ENCODE measurements at regions of chr4 and their contacts with region 1.

Region 1: GRCh38 chr4:91113130-91113706 is 986.0 kb downstream of the CCSER1 start:
- DNase-seq: peak; percentile 39
- H3K4me3 Mint-ChIP-seq: no peak overlapping the region
- H3K27ac Mint-ChIP-seq: no peak overlapping the region
- H3K4me1 Mint-ChIP-seq: no peaks in the 10 kb centered on the region
- H3K27me3 Mint-ChIP-seq: no peaks in the 10 kb centered on the region
- CTCF ChIP-seq: peak; percentile 71

Region 2: GRCh38 chr4:90317785-90318184 is 795.4 kb before region 1 on chr4:
- CTCF ChIA-PET with region 1: no interaction called
- POLR2A ChIA-PET with region 1: interaction called, 3 read pairs
- intact Hi-C with region 1: loop called (anchors 2 kb)
- DNase-seq: peak; percentile 84
- H3K4me3 Mint-ChIP-seq: peak overlapping the region; percentile 36
- H3K27ac Mint-ChIP-seq: peak overlapping the region; percentile 81
- H3K4me1 Mint-ChIP-seq: peaks cover 7% of the 10 kb centered on the region
- H3K27me3 Mint-ChIP-seq: no peaks in the 10 kb centered on the region
- CTCF ChIP-seq: no peak

Region 3: DNA sequence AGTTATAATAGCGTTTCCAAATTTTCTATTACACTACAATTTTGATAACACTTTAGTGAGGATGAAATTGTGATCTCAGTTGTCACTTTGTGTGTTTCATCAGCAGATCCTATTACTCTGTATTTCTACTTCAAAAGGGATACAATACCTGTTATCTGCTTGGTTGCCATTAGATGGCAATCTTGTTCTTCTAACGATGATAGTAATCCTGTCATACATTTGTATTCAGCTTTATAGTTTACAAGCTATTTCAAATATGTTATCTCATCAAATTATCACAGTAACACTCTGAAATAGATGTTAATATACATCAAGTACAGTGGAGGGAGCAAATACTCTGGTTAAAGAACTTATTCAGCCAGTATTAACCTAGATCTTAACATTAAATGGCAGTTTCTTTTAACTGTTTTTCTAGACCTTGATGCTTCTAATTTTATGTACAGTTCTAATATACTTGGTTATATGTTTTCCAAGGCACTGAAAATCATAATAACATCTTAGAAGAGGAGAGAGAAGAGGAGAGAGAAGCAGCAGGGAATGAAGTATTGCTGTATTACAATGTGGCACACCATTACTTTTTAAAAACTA is 694.0 kb before region 1 on chr4:
- CTCF ChIA-PET with region 1: interaction called, 11 read pairs
- POLR2A ChIA-PET with region 1: no interaction called
- intact Hi-C with region 1: loop called (anchors 2 kb)
- DNase-seq: peak; percentile 61
- H3K4me3 Mint-ChIP-seq: no peak overlapping the region
- H3K27ac Mint-ChIP-seq: no peak overlapping the region
- H3K4me1 Mint-ChIP-seq: no peaks in the 10 kb centered on the region
- H3K27me3 Mint-ChIP-seq: no peaks in the 10 kb centered on the region
- CTCF ChIP-seq: peak; percentile 56

Region 4: DNA sequence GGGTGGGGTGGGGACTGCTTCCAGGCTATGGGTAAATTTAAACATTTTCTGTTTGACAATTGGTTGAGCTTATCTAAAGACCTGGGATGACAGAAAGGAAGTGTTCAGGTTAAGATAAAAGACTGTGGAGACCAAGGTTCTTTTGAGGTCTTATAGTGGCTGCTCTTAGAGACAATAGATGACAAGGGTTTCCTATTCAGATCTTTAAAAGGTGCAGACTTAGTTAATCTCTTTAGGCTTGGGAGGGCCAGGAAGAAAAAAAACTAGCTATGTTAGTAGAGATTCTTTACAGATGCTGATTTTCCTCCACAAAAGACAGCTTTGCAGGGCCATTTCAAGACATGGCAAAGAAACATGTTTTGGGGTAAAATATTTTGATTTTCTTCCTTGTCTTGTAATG is 13.6 kb before region 1 on chr4:
- CTCF ChIA-PET with region 1: interaction called, 13 read pairs
- POLR2A ChIA-PET with region 1: no interaction called
- intact Hi-C with region 1: no loop called
- DNase-seq: no peak
- H3K4me3 Mint-ChIP-seq: no peak overlapping the region
- H3K27ac Mint-ChIP-seq: no peak overlapping the region
- H3K4me1 Mint-ChIP-seq: no peaks in the 10 kb centered on the region
- H3K27me3 Mint-ChIP-seq: no peaks in the 10 kb centered on the region
- CTCF ChIP-seq: no peak

Region 5: DNA sequence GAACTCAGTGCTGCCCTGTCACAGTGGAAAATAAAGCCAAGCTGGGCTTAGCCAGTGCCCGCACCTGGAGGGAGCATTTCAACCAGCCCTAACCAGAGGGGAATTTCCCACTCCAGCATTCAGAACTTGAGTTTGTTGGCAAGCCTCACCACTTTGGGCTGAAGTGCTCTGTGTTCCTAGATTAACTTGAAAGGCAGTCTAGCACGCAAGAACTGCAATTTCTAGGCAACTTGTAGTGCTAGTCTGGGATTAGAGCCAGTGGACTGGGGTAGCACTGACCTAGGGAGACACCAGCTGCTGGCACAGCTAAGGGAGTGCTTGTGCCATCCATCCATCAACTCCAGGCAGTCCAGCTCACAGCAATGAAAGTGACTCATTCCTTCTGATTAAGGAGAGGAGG is 129.9 kb after region 1 on chr4:
- CTCF ChIA-PET with region 1: no interaction called
- POLR2A ChIA-PET with region 1: no interaction called
- intact Hi-C with region 1: no loop called
- DNase-seq: peak; percentile 60
- H3K4me3 Mint-ChIP-seq: no peak overlapping the region
- H3K27ac Mint-ChIP-seq: no peak overlapping the region
- H3K4me1 Mint-ChIP-seq: no peaks in the 10 kb centered on the region
- H3K27me3 Mint-ChIP-seq: no peaks in the 10 kb centered on the region
- CTCF ChIP-seq: no peak

Region 6: GRCh38 chr4:91280551-91281290 is 167.5 kb after region 1 on chr4:
- CTCF ChIA-PET with region 1: no interaction called
- POLR2A ChIA-PET with region 1: no interaction called
- intact Hi-C with region 1: no loop called
- DNase-seq: no peak
- H3K4me3 Mint-ChIP-seq: no peak overlapping the region
- H3K27ac Mint-ChIP-seq: no peak overlapping the region
- H3K4me1 Mint-ChIP-seq: no peaks in the 10 kb centered on the region
- H3K27me3 Mint-ChIP-seq: no peaks in the 10 kb centered on the region
- CTCF ChIP-seq: no peak

Region 7: GRCh38 chr4:92163348-92163747 is 1050.1 kb after region 1 on chr4:
- CTCF ChIA-PET with region 1: interaction called, 3 read pairs
- POLR2A ChIA-PET with region 1: no interaction called
- intact Hi-C with region 1: loop called (anchors 10 kb)
- DNase-seq: peak; percentile 27
- H3K4me3 Mint-ChIP-seq: no peak overlapping the region
- H3K27ac Mint-ChIP-seq: no peak overlapping the region
- H3K4me1 Mint-ChIP-seq: no peaks in the 10 kb centered on the region
- H3K27me3 Mint-ChIP-seq: no peaks in the 10 kb centered on the region
- CTCF ChIP-seq: peak; percentile 12

Region 8: DNA sequence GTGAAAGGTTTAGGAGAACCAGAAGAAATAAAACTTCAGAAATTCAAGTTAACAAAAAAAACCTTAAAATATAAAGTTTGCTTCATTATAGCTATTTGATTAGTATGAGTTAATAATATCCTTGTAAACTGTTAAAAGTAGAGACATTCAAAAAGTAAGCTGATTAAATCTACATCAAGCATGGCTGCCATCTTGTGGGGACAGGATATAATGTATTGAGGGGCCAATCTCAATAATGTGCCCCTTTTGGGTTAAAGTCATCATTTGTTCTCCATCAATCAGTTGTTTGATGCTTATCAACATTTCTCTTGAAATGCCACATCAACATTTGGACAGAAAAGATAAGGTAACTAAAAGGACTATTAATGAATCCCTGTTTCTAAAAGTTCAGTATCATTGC is 1185.9 kb after region 1 on chr4:
- CTCF ChIA-PET with region 1: interaction called, 5 read pairs
- POLR2A ChIA-PET with region 1: no interaction called
- intact Hi-C with region 1: loop called (anchors 2 kb)
- DNase-seq: peak; percentile 45
- H3K4me3 Mint-ChIP-seq: no peak overlapping the region
- H3K27ac Mint-ChIP-seq: no peak overlapping the region
- H3K4me1 Mint-ChIP-seq: peaks cover 8% of the 10 kb centered on the region
- H3K27me3 Mint-ChIP-seq: peaks cover 3% of the 10 kb centered on the region
- CTCF ChIP-seq: peak; percentile 51

Region 9: GRCh38 chr4:92387459-92388069 is 1274.3 kb after region 1 on chr4:
- CTCF ChIA-PET with region 1: interaction called, 3 read pairs
- POLR2A ChIA-PET with region 1: no interaction called
- intact Hi-C with region 1: loop called (anchors 1 kb)
- DNase-seq: peak; percentile 51
- H3K4me3 Mint-ChIP-seq: no peak overlapping the region
- H3K27ac Mint-ChIP-seq: no peak overlapping the region
- H3K4me1 Mint-ChIP-seq: no peaks in the 10 kb centered on the region
- H3K27me3 Mint-ChIP-seq: no peaks in the 10 kb centered on the region
- CTCF ChIP-seq: peak; percentile 33

Measured in MCF 10A (cell line).